Right cardiac atrium (tissue), 5 donors: ENCODE measurements at regions of chr3 and their contacts with region 1.

Region 1: DNA sequence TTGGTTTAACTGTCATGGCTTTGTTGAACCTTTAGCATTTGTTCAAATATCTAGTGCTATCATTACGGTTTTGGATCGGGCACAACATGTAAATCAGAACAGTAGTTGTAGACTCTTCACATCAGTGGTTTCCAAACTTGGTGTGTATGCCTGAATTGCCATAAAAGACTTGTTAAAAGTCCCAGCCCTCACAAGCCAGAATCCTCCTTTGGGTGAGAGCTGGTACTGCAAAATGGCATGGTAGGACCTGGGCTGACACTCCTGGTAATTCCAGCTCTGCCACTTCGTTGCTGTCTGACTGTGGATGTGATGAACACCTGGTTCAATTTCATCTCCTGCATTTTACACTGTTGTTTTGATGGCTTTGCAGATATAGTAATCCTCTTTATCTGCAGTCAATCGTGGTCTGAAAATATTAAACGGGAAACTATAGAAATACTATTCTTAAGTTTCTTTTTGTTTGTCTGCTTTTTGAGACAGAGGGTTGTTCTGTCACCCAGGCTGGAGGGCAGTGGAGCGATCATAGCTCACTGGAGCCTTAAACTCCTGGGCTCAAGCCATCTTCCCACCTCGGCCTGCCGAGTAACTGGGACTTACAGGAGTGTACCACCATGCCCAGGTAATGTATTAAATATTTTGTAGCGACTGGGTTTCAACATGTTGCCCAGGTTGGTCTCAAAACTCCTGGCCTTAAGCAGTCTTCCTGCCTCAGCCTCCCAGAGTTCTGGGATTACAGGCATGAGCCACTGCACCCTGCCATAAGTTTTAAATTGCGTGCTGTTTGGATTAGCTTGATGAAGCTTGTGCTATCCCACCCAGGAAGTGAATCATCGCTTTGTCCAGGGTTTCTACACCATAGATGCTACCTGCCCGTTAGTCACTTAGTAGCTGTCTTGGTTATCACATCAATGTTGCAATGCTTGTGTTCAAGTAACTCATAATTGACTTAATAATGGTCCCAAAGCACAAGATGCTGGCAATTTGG is 61.6 kb downstream of the RAB7A start:
- DNase-seq: no peak
- ATAC-seq: no peak
- H3K4me3 ChIP-seq: no peak overlapping the region
- H3K27ac ChIP-seq: peak overlapping the region; percentile 42
- H3K4me1 ChIP-seq: peaks cover 29% of the 10 kb centered on the region
- H3K27me3 ChIP-seq: no peaks in the 10 kb centered on the region

Region 2: DNA sequence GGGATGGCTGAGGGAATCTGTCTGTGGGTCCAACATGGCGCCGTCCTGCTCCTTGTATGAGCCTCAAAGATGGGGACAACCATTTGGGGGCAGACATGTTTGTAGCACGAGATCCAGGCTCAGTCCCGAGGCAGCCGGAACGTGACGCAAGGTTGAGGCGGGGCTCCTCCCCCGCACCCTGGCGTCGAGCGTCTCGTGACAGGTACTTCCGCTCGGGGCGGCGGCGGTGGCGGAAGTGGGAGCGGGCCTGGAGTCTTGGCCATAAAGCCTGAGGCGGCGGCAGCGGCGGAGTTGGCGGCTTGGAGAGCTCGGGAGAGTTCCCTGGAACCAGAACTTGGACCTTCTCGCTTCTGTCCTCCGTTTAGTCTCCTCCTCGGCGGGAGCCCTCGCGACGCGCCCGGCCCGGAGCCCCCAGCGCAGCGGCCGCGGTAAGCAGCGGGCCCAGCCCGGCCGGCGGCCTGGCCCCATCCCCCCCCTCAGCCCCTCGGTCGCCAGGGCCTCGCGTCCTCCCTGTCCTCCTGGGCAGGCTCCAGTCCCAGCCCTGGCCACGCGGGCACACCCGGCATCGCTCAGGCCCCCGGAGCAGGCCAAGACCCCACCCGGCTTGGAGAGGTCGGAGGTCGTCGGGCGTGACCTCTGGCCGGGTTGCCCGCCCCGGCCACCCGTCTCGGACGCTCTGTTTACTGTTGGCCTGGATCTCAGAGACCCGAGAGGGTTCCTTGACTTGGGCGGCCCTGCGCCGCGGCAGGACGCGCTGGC is 61.4 kb before region 1 on chr3 and contains the start of gene RAB7A:
- intact Hi-C with region 1: loop called in 1 of 4 experiments (anchors 10 kb)
- DNase-seq: peak; percentile 98 to 99 (median 99)
- ATAC-seq: peak; percentile 98 to 99
- H3K4me3 ChIP-seq: peak within 1 kb of the TSS; percentile 76
- H3K27ac ChIP-seq: peak within 1 kb of the TSS; percentile 86
- H3K4me1 ChIP-seq: peaks cover 7% of the 10 kb centered on the region
- H3K27me3 ChIP-seq: no peaks in the 10 kb centered on the region
- total RNA-seq, gene RAB7A: 228 to 242 (median 238) TPM